ENCODE measurements at regions of chr1 and their contacts with region 1.

Region 1: DNA sequence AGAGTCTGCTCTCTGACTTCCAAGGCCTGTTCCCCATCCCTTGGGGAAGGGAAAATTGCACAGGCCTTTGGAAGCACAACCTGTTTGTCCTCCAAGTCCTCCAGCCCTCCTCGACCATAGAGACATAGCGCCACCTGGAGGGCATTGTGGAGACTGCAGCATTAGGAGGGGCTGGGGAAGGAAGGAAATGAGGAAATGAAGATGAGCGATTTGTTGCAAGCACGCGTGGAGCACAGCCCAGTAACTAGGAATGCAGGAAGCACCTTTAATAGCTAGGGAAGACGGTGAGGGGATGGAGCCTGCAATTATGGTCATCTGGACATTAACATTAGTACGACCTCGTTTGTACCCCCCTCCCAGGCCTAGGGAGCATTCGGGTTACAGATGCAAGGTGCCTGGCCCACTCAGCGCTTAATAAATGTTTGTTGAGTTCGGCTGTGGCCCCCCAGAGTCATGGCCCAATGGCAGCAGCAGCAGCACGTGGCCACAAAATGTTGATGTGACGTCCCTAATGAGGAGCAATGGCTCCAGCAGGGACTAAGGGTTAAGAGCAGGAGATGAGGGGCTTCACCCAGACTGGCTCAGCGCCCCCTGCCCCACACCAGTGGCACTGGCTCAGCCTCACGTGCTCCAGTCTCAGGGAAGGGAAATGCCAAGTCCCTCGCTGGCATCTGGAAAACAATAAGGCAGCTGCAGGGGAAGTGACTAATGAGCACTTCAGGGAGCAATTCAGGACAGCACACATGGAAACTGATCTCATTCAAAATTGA is 8.0 kb upstream of the CAMK2N1 start:
- H3K4me3 Mint-ChIP-seq: no peak overlapping the region
- H3K27ac Mint-ChIP-seq: no peak overlapping the region
- H3K4me1 Mint-ChIP-seq: peaks cover 20% of the 10 kb centered on the region
- H3K27me3 Mint-ChIP-seq: peaks cover 50% of the 10 kb centered on the region

Region 2: GRCh38 chr1:20212685-20213331 is 281.2 kb before region 1 on chr1:
- intact Hi-C with region 1: loop called (anchors 2 kb)
- H3K4me3 Mint-ChIP-seq: no peak overlapping the region
- H3K27ac Mint-ChIP-seq: no peak overlapping the region
- H3K4me1 Mint-ChIP-seq: no peaks in the 10 kb centered on the region
- H3K27me3 Mint-ChIP-seq: peaks cover 50% of the 10 kb centered on the region

Region 3: DNA sequence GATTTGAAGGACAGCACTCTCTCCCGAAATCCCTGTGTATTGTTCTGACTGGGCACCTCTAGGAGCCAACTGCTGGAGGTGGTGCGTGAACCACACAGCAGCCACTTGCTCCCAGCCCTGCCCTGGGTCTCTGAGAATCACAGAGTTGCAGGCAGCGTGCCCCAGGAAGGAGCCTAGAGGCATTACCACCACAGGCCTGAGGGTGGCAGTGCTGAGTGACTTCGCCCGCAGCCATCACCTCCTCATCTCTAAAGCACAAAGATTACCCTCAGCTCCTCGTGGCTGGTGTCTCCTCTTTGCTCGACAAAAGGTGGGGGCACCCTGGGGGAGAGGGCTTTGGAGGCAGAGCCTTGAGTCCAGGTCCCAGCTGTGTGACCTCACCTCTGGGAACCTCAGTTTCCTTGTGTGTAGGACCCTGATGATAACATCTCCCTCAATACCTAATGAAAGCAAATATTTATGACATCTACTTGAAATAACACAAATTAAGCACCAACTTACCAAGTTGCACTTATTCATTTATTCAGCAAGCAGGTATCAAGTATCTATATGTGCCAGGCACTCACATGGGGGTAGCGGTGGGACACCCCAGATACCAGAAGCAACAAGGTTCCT is 117.0 kb before region 1 on chr1:
- intact Hi-C with region 1: loop called (anchors 5 kb)
- H3K4me3 Mint-ChIP-seq: no peak overlapping the region
- H3K27ac Mint-ChIP-seq: no peak overlapping the region
- H3K4me1 Mint-ChIP-seq: no peaks in the 10 kb centered on the region
- H3K27me3 Mint-ChIP-seq: peaks cover 20% of the 10 kb centered on the region